GM23248 (cell line): ENCODE measurements at regions of chr12 and their contacts with region 1.

Region 1: DNA sequence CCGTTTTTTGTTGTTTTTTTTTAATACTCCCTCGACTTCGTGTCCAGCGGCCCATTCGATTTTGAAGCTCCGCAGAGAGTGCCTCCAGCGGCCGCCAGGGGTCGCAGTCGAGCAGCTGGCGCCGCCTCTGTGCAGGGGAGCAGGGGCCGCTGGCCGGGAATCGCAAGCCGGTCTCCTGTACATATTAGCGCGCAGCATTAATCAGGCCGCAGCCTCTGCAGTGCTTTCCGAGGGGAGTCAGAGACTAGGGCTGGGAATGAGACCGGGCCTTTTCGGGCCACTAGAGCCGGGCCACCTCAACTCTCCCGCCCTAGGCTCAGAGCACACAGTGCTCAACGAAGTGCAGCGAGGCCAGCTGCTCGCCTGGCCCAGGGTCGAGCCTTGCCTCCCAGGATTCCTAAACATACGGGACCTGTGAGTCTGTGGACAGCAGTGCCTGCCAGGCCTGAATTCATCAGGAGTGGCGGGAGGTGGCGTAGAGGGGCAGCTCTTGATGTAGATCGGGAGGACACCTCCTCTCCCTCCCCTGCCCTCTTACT is 81.8 kb downstream of the EMP1 start:
- DNase-seq: peak; percentile 71
- H3K4me3 ChIP-seq: no peak overlapping the region
- H3K27ac ChIP-seq: no peak overlapping the region
- H3K4me1 ChIP-seq: no peaks in the 10 kb centered on the region
- H3K27me3 ChIP-seq: peaks cover 41% of the 10 kb centered on the region

Region 2: GRCh38 chr12:13135371-13136178 is 142.7 kb before region 1 on chr12:
- in situ Hi-C with region 1: no loop called
- DNase-seq: peak; percentile 98
- H3K4me3 ChIP-seq: peak overlapping the region; percentile 69
- H3K27ac ChIP-seq: peak overlapping the region; percentile 92
- H3K4me1 ChIP-seq: peaks cover 37% of the 10 kb centered on the region
- H3K27me3 ChIP-seq: no peaks in the 10 kb centered on the region

Region 3: DNA sequence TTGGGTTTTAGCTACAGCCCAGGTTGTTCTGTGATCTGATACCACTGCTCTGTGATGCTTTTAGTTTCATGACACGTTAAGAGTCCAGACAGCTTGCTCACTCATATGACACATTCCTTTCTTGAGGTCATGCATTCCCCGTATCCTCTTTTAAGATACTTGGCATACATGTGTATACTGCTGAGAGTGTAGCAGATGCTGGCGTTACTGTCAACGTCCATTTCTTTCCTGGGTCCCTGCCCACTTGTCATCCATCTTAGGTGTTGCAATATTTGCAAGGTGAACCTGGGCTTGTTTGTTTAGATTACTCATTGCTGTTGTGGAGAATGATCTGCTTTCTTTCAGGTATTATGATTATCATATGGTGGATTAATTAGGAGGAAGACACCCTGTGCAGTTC is 90.9 kb before region 1 on chr12:
- in situ Hi-C with region 1: no loop called
- DNase-seq: peak; percentile 92
- H3K4me3 ChIP-seq: no peak overlapping the region
- H3K27ac ChIP-seq: peak overlapping the region; percentile 48
- H3K4me1 ChIP-seq: peaks cover 23% of the 10 kb centered on the region
- H3K27me3 ChIP-seq: no peaks in the 10 kb centered on the region

Region 4: DNA sequence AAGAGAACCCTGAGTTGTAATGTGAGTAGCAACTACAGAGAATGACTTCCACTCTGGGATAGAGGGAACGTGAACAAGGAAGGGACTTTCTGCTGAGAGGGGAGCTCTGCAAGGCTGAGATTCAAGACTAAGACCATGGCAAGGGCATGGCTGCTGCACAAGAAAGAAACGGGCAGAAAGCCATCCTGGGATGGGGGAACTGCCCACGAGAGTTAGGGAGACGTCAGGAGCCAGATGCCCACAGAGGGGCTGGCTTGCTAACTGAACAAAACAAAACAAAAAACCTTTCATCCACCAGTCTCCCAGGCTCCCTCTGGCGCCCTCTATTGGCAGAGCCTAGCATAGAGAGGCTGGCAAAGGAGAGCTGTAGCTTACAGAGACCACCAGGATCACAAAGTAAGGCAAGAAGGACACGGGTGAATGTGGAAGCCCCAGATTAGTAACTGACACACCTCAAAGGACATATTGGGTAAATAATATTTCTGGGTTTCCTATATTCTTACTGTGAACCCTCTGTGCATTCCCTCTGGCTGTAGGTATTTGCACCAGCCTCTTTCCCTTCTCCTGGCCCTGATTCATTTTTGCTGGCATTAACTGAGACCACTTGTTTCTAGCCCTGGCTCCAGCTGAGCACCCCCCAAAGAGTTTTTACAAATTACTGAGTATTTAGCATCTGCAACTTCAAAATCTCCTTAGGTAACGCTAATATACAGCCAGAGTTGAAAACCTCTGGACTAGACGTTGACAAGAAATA is 256.5 kb after region 1 on chr12:
- in situ Hi-C with region 1: loop called (anchors 10 kb)
- DNase-seq: peak; percentile 66
- H3K4me3 ChIP-seq: peak overlapping the region; percentile 46
- H3K27ac ChIP-seq: no peak overlapping the region
- H3K4me1 ChIP-seq: no peaks in the 10 kb centered on the region
- H3K27me3 ChIP-seq: peaks cover 50% of the 10 kb centered on the region

Region 5: DNA sequence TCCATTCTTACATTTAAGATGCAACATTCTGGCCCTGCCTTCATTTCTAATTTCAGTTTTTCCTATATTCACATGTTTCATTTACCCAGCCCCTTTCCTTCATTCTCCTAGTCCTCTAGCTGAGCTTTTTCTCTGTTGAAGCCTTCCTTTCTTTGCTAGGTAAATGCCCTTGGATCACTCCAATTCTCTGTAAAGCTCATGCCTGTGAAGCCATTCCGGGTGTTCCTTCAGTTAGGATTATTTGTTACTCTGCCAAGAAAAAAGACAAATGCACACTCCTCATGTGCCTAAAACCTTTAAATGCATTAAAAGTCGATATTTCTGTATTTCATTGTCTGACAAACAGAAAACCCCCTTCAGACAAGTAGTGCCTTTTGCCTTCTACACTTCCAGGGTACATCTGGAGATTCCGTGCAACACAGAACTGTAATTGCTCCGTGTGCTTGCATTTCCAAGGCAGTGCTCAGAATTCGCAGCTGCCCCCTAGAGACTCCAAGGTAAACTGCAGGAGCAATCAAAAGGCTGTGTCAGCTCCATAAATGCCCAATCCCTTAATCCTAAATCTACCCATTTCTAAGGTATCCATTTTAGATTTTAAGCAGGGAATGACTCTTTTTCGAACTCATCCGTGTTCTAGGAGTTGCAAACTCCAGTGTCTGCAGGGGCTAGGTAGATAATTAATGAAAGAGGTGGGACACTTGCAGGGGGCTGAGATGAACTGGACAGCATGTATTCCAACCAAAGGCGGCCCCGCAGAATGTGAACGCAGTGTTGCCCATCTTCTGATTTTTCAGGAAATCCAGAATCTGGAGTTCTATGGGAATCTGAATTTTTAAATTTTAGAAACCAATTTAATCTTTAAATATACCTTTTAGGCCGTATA is 382.9 kb after region 1 on chr12:
- in situ Hi-C with region 1: loop called (anchors 25 kb)
- DNase-seq: peak; percentile 78
- H3K4me3 ChIP-seq: no peak overlapping the region
- H3K27ac ChIP-seq: no peak overlapping the region
- H3K4me1 ChIP-seq: no peaks in the 10 kb centered on the region
- H3K27me3 ChIP-seq: peaks cover 13% of the 10 kb centered on the region

Region 6: DNA sequence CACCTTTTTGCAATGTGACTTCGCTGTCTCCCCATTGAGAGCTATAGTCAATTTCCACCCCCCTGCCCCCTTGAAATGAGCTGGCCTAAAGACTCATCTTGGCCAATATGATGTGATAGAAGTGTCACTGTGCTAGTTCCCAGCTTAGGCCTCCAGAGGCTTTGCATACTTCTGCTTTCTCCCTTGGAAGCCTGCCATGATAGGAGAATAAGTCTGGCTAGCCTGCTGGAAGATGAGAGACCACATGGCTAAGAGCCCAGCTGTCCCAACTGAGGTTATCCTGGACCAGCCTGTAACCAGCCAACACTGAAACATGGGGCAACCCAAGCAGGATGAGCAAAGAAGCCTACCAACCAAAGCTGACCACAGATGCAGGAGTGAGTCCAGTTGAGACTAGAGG is 506.2 kb after region 1 on chr12:
- in situ Hi-C with region 1: no loop called
- DNase-seq: peak; percentile 2
- H3K4me3 ChIP-seq: no peak overlapping the region
- H3K27ac ChIP-seq: no peak overlapping the region
- H3K4me1 ChIP-seq: no peaks in the 10 kb centered on the region
- H3K27me3 ChIP-seq: no peaks in the 10 kb centered on the region

Region 7: GRCh38 chr12:14167005-14167628 is 888.8 kb after region 1 on chr12:
- in situ Hi-C with region 1: loop called (anchors 10 kb)
- DNase-seq: peak; percentile 60
- H3K4me3 ChIP-seq: no peak overlapping the region
- H3K27ac ChIP-seq: no peak overlapping the region
- H3K4me1 ChIP-seq: no peaks in the 10 kb centered on the region
- H3K27me3 ChIP-seq: no peaks in the 10 kb centered on the region